ENCODE measurements at regions of chr20 and their contacts with region 1.

Region 1: GRCh38 chr20:1631309-1632151 is 11.7 kb upstream of the SIRPB1 start:
- DNase-seq: no peak
- ATAC-seq: no peak
- H3K4me3 ChIP-seq: no peak overlapping the region
- H3K4me3 Mint-ChIP-seq: peak overlapping the region; percentile 48
- H3K27ac ChIP-seq: peak overlapping the region; percentile 7 to 53
- H3K27ac Mint-ChIP-seq: peak overlapping the region; percentile 93
- H3K4me1 ChIP-seq: peaks cover 27% of the 10 kb centered on the region
- H3K4me1 Mint-ChIP-seq: peaks cover 56% of the 10 kb centered on the region
- H3K27me3 ChIP-seq: no peaks in the 10 kb centered on the region
- H3K27me3 Mint-ChIP-seq: no peaks in the 10 kb centered on the region
- CTCF ChIP-seq: no peak

Region 2: GRCh38 chr20:1255675-1256074 is 375.9 kb before region 1 on chr20:
- CTCF ChIA-PET with region 1: no interaction called
- POLR2A ChIA-PET with region 1: no interaction called
- intact Hi-C with region 1: no loop called
- DNase-seq: no peak
- ATAC-seq: no peak
- H3K4me3 ChIP-seq: no peak overlapping the region
- H3K4me3 Mint-ChIP-seq: no peak overlapping the region
- H3K27ac ChIP-seq: no peak overlapping the region
- H3K27ac Mint-ChIP-seq: no peak overlapping the region
- H3K4me1 ChIP-seq: peaks cover 6% of the 10 kb centered on the region
- H3K4me1 Mint-ChIP-seq: peaks cover 6% of the 10 kb centered on the region
- H3K27me3 ChIP-seq: peaks cover 0 to 3% of the 10 kb centered on the region in 2 experiments
- H3K27me3 Mint-ChIP-seq: peaks cover 10% of the 10 kb centered on the region
- CTCF ChIP-seq: no peak

Region 3: DNA sequence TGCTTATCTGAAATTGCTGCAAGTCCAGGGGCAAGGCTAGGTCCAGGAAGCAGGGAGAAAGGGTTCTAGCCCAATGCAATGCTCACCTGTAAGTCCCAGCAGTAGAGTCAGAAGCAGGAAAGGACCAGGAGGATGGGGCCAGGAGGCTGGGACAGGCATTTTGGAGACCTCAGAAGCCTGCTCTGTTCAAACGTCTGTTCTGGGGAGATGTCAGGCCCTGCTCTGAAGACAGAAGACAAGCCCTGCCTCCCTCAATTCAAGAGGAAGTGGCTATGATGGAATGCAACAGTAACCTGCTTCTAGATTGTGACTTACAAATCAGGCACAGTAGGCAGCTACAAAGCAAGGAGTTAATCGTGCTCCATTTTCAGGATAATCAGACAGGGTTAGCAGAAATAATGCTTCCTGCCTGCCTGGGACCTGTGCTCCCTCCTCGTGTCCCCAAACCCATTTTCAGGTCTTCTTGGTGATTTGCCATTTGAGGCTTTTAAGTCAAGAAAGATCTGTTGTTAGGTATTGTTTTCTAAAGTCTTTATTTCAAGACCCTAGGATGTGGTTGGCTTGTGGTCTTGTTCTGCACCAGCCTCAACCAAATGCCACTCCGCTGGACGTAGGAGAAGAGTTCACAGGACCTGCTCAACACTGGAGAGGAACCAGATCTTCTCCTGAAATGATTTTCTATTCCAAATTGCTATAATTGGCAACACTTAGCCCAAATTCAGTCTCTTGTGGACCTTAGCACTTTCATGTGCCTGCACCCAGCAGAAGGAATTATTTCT is 26.2 kb after region 1 on chr20 and contains the start of gene SIRPG:
- CTCF ChIA-PET with region 1: no interaction called
- POLR2A ChIA-PET with region 1: no interaction called
- intact Hi-C with region 1: no loop called
- DNase-seq: peak in 3 of 9 experiments; percentile 31 to 60 (median 40)
- ATAC-seq: peak; percentile 51
- H3K4me3 ChIP-seq: peak within 1 kb of the TSS; percentile 52 to 59
- H3K4me3 Mint-ChIP-seq: peak within 1 kb of the TSS; percentile 89
- H3K27ac ChIP-seq: peak within 1 kb of the TSS; percentile 39 to 68
- H3K27ac Mint-ChIP-seq: peak within 1 kb of the TSS; percentile 96
- H3K4me1 ChIP-seq: peaks cover 87% of the 10 kb centered on the region
- H3K4me1 Mint-ChIP-seq: peaks cover 88% of the 10 kb centered on the region
- H3K27me3 ChIP-seq: no peaks in the 10 kb centered on the region
- H3K27me3 Mint-ChIP-seq: no peaks in the 10 kb centered on the region
- CTCF ChIP-seq: no peak
- total RNA-seq, gene SIRPG: 17.1 to 17.6 TPM

Region 4: DNA sequence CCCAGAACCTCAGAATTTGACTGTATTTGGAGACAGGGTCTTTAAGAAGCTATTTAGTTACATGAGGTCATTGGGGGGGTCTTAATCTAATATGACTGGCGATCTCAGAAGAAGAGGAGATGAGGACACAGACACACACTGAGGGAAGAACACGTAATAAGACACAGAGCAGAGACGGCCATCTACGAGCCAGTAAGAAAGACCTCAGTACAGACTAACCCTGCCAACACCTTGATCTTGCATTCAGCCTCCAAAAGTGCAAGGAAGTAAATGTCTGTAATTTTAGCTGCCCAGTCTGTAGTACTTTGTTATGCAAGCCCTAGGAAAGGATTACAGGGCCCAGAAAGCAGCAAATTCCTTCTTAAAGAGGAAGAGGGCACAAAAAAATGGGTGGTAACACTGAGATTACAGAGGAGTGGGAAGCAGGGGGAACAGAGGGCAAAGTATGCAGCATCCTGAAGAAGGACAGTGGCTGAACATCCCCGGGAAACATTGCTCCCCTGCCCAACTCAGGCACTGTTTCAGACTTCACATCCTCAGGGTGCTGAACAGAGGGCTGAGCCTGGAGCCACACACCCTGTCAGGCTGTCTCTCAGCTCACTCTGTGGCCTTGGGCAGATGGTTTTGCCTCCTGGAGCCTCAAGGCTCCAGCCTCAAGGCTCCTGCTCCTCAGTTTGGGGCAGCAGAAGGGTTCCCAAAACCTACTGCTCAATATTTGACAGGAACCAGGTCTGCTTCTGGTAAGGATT is 53.9 kb after region 1 on chr20:
- CTCF ChIA-PET with region 1: no interaction called
- POLR2A ChIA-PET with region 1: no interaction called
- intact Hi-C with region 1: loop called in 1 of 2 experiments (anchors 5 kb)
- DNase-seq: no peak
- ATAC-seq: peak; percentile 50
- H3K4me3 ChIP-seq: peak overlapping the region; percentile 49 to 61
- H3K4me3 Mint-ChIP-seq: peak overlapping the region; percentile 87
- H3K27ac ChIP-seq: peak overlapping the region; percentile 39 to 62
- H3K27ac Mint-ChIP-seq: peak overlapping the region; percentile 92
- H3K4me1 ChIP-seq: peaks cover 26% of the 10 kb centered on the region
- H3K4me1 Mint-ChIP-seq: peaks cover 68% of the 10 kb centered on the region
- H3K27me3 ChIP-seq: no peaks in the 10 kb centered on the region
- H3K27me3 Mint-ChIP-seq: no peaks in the 10 kb centered on the region
- CTCF ChIP-seq: no peak

Region 5: GRCh38 chr20:1783245-1783644 is 151.7 kb after region 1 on chr20:
- CTCF ChIA-PET with region 1: no interaction called
- POLR2A ChIA-PET with region 1: no interaction called
- intact Hi-C with region 1: no loop called
- DNase-seq: no peak
- ATAC-seq: no peak
- H3K4me3 ChIP-seq: no peak overlapping the region
- H3K4me3 Mint-ChIP-seq: no peak overlapping the region
- H3K27ac ChIP-seq: no peak overlapping the region
- H3K27ac Mint-ChIP-seq: no peak overlapping the region
- H3K4me1 ChIP-seq: no peaks in the 10 kb centered on the region
- H3K4me1 Mint-ChIP-seq: no peaks in the 10 kb centered on the region
- H3K27me3 ChIP-seq: peaks cover 2 to 7% of the 10 kb centered on the region in 2 experiments
- H3K27me3 Mint-ChIP-seq: peaks cover 54% of the 10 kb centered on the region
- CTCF ChIP-seq: no peak